Activated CD4-positive, alpha-beta T cell treated with anti-CD3 and anti-CD28 coated beads, Interleukin-2, amount 10 ng/mL, durations not matched to agents 24 days and 14 days (primary cell): ENCODE measurements at regions of chr1 and their contacts with region 1.

Region 1: GRCh38 chr1:33127001-33127791 is 46.2 kb downstream of the AZIN2 start:
- DNase-seq: peak; percentile 100
- H3K4me3 Mint-ChIP-seq: peak overlapping the region; percentile 95
- H3K27ac Mint-ChIP-seq: peak overlapping the region; percentile 97
- H3K4me1 Mint-ChIP-seq: peaks cover 39% of the 10 kb centered on the region
- H3K27me3 Mint-ChIP-seq: no peaks in the 10 kb centered on the region

Region 2: GRCh38 chr1:32801096-32801715 is 326.0 kb before region 1 on chr1:
- intact Hi-C with region 1: loop called (anchors 1 kb)
- DNase-seq: peak; percentile 84
- H3K4me3 Mint-ChIP-seq: peak overlapping the region; percentile 58
- H3K27ac Mint-ChIP-seq: peak overlapping the region; percentile 78
- H3K4me1 Mint-ChIP-seq: peaks cover 41% of the 10 kb centered on the region
- H3K27me3 Mint-ChIP-seq: no peaks in the 10 kb centered on the region

Region 3: DNA sequence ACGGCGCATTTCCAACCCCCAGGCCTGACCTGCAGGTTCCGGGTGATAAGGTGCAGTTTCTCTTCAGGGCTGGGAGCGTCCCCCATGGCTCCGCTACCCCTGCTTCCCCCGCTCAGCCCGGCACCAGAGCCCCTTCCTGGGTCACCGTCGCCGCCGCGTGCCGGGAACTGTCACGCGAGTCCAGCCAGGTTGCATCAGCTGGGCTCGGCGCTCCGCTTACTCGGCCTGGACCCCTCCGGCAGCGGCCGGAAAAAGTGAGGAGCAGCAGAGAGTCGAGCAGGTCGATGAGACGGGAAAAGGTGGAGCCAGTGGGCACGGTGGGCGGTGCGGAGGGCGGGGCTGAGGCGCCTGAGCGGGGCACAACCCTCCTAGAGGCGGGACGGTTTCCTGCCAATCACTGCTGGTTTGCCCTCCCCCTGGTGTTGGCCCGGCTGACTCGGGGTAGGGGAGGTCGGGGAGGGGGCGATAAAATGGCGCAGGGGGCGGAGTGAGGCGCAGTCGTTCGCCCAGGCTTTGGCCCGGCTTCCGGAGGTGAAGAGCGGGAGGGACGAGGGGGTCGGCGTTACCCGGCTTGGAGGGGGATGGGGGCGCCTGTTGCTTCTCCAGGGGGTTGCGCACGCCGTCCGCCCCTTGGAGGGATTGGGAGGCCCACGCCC is 309.9 kb before region 1 on chr1 and contains the starts of genes S100PBP and YARS1:
- intact Hi-C with region 1: loop called (anchors 1 kb)
- DNase-seq: peak; percentile 100
- H3K4me3 Mint-ChIP-seq: peak within 1 kb of the TSS; percentile 99
- H3K27ac Mint-ChIP-seq: peak within 1 kb of the TSS; percentile 98
- H3K4me1 Mint-ChIP-seq: peaks cover 51% of the 10 kb centered on the region
- H3K27me3 Mint-ChIP-seq: no peaks in the 10 kb centered on the region
- total RNA-seq, gene S100PBP: 43.8 and 46.9 TPM in 2 replicates
- total RNA-seq, gene YARS1: 206 and 214 TPM in 2 replicates

Region 4: GRCh38 chr1:33080885-33081553 is 46.2 kb before region 1 on chr1 and contains the start of gene AZIN2:
- intact Hi-C with region 1: loop called (anchors 2 kb)
- DNase-seq: peak; percentile 99
- H3K4me3 Mint-ChIP-seq: peak within 1 kb of the TSS; percentile 77
- H3K27ac Mint-ChIP-seq: peak within 1 kb of the TSS; percentile 10
- H3K4me1 Mint-ChIP-seq: peaks cover 22% of the 10 kb centered on the region
- H3K27me3 Mint-ChIP-seq: peaks cover 16% of the 10 kb centered on the region
- total RNA-seq, gene AZIN2: 1.3 and 1.4 TPM in 2 replicates

Region 5: DNA sequence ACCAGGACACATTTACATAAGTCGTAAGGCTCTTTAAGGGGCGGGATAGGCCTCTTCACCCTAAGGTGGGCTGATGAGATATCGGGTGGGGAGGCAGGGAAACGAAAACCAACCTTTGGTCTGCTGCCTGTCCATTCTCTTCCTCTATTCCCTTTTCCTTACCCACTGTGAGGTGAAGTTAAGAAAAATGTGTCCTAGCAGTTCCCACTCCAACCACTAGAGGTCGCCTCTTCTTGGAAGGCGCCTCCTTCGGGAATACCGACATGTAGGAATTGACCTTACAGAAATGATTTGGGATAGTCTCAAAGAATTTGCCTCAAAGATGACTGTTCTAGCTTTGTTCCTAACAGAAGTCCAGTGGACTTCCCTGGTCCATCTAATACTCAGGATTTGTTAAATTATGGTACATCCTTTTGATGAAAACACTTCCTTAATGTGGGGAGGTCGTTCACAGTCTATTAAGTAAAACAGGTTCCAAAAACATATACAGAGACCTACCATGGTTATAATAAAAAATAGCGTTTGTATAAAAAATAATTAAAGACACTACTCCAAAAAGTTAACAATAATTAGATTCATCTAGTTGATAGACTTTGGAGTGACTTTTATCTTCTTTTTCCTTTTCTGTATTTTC is 32.1 kb before region 1 on chr1:
- intact Hi-C with region 1: loop called (anchors 1 kb)
- DNase-seq: peak; percentile 77
- H3K4me3 Mint-ChIP-seq: no peak overlapping the region
- H3K27ac Mint-ChIP-seq: no peak overlapping the region
- H3K4me1 Mint-ChIP-seq: peaks cover 59% of the 10 kb centered on the region
- H3K27me3 Mint-ChIP-seq: no peaks in the 10 kb centered on the region

Region 6: GRCh38 chr1:33181921-33182341 is 54.7 kb after region 1 on chr1 and contains the start of gene TRIM62:
- intact Hi-C with region 1: loop called (anchors 1 kb)
- DNase-seq: peak; percentile 94
- H3K4me3 Mint-ChIP-seq: peak within 1 kb of the TSS; percentile 91
- H3K27ac Mint-ChIP-seq: peak within 1 kb of the TSS; percentile 80
- H3K4me1 Mint-ChIP-seq: peaks cover 25% of the 10 kb centered on the region
- H3K27me3 Mint-ChIP-seq: peaks cover 32% of the 10 kb centered on the region
- total RNA-seq, gene TRIM62: 3.1 and 3.2 TPM in 2 replicates

Region 7: DNA sequence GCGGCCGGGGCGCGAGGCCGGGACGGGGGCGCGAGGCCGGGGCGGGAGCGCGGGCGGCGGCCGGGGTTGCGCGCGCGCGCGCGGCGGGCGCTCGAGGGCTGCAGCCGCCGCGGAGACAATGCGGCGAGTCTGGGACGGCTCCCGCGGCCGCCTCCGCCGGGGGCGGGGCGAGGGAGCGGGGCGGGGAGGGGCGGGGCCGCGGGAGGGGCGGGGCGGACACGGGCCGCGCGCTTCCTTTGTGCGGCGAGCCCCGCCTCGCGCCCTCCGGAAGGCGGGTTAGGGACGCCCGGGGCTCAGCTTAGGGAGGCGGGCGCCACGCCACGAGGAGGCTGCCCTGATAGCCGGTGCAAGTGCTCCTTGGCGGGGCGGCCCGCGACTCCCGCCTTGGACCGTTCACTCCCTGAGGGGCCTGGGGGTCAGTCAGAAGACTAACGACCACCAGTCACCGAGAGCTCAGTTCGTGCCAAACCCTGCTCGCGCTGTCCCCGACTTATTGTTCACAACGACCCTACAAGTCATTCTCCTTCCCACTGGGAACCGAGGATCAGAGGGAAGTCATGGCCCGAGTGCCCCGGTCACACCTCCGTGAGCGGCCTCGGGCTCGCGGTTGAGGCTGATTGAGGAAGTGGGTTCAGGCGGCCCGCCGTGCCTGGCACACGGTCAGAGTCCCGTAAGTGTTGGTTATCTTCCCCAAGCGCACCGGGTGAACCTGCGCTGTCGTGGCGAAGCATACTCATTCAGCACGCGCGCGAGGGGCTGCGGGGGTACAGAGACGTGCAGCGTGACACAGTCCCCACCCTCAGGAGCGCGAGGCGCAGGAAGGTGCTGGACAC is 222.8 kb after region 1 on chr1:
- intact Hi-C with region 1: loop called (anchors 2 kb)
- DNase-seq: peak; percentile 95
- H3K4me3 Mint-ChIP-seq: peak overlapping the region; percentile 95
- H3K27ac Mint-ChIP-seq: peak overlapping the region; percentile 90
- H3K4me1 Mint-ChIP-seq: peaks cover 39% of the 10 kb centered on the region
- H3K27me3 Mint-ChIP-seq: peaks cover 2% of the 10 kb centered on the region